Motor neuron (in vitro differentiated cells): ENCODE measurements at regions of chr20 and their contacts with region 1.

Region 1: GRCh38 chr20:5078399-5078958 is 41.3 kb downstream of the PCNA start:
- ATAC-seq: peak in 2 of 8 experiments; percentile 68 to 92
- H3K4me3 ChIP-seq: no peak overlapping the region
- H3K27ac ChIP-seq: no peak overlapping the region
- H3K4me1 ChIP-seq: no peaks in the 10 kb centered on the region

Region 2: DNA sequence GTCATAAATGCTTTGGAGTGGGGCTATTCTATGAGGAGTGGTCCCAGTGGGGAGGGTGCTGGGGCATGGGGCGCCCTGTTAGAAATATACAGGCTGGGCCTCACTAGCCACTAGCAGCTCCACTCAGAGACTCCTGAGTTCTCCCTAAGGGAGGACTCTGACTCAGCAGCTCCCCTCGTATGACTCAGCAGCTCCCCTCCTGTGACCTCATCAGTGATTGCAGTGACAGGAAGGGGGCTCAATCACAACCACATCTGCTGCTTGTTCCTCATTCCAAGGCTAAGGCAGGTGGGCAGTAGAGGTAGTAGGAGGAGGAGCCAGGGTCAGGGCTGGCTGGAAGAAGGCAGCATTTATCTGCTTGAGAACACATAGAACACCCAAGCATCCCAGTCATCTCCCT is 283.1 kb before region 1 on chr20:
- in situ Hi-C with region 1: loop called in 1 of 9 experiments (anchors 25 kb)
- ATAC-seq: peak; percentile 16 to 97 (median 78)
- H3K4me3 ChIP-seq: no peak overlapping the region
- H3K27ac ChIP-seq: no peak overlapping the region
- H3K4me1 ChIP-seq: no peaks in the 10 kb centered on the region

Region 3: GRCh38 chr20:4998160-4998654 is 80.3 kb before region 1 on chr20:
- in situ Hi-C with region 1: loop called in 1 of 9 experiments (anchors 25 kb)
- ATAC-seq: no peak
- H3K4me3 ChIP-seq: no peak overlapping the region
- H3K27ac ChIP-seq: no peak overlapping the region
- H3K4me1 ChIP-seq: peaks cover 4 to 5% of the 10 kb centered on the region in 2 donors